ENCODE measurements at regions of chr11 and their contacts with region 1.

Region 1: DNA sequence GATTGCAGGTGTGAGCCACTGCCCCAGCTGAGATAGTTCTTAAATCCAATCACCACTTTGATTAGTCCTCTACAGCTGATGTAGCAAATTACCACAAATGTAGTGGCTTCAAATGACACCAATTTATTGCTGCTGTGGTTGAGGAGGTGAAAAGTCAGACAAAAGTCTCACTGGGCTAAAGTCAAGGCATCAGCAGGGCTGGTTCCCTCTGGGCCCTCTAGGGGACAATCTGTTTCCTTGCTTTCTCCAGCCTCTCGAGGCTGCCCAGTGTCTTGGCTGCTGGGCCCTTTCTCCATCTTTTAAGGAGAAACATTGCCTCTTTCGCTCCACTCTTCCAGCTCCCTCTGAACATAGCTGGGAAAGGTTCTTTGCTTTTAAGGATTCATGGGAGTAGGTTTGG is 50.5 kb upstream of the SHANK2 start:
- DNase-seq: no peak
- ATAC-seq: no peak
- H3K4me3 ChIP-seq: no peak overlapping the region
- H3K27ac ChIP-seq: no peak overlapping the region
- H3K4me1 ChIP-seq: 0 out of 2 replicates have a peak, but pooled peaks cover 11% of the 10 kb centered on the region
- H3K27me3 ChIP-seq: no peaks in the 10 kb centered on the region
- CTCF ChIP-seq: no peak

Region 2: GRCh38 chr11:70029115-70029830 is 1273.6 kb before region 1 on chr11:
- CTCF ChIA-PET with region 1: no interaction called
- POLR2A ChIA-PET with region 1: no interaction called
- in situ Hi-C with region 1: no loop called
- intact Hi-C with region 1: no loop called
- DNase-seq: no peak
- ATAC-seq: peak; percentile 62; the same call in 1 of the 2 replicates
- H3K4me3 ChIP-seq: no peak overlapping the region
- H3K27ac ChIP-seq: no peak overlapping the region
- H3K4me1 ChIP-seq: no peaks in the 10 kb centered on the region
- H3K27me3 ChIP-seq: no peaks in the 10 kb centered on the region; the same call in 1 of the 2 replicates
- CTCF ChIP-seq: no peak

Region 3: GRCh38 chr11:71448257-71449171 is 145.6 kb after region 1 on chr11 and contains the start of gene DHCR7:
- CTCF ChIA-PET with region 1: no interaction called
- POLR2A ChIA-PET with region 1: interaction called, 11 read pairs
- in situ Hi-C with region 1: no loop called
- intact Hi-C with region 1: no loop called
- DNase-seq: peak; percentile 36
- ATAC-seq: peak; percentile 93
- H3K4me3 ChIP-seq: peak within 1 kb of the TSS; percentile 85 to 87
- H3K27ac ChIP-seq: peak within 1 kb of the TSS; percentile 87
- H3K4me1 ChIP-seq: peaks cover 28% of the 10 kb centered on the region
- H3K27me3 ChIP-seq: no peaks in the 10 kb centered on the region
- CTCF ChIP-seq: no peak
- total RNA-seq, gene DHCR7: 356 TPM

Measured in Panc1 (cell line).